ENCODE measurements at regions of chr19 and their contacts with region 1.

Region 1: DNA sequence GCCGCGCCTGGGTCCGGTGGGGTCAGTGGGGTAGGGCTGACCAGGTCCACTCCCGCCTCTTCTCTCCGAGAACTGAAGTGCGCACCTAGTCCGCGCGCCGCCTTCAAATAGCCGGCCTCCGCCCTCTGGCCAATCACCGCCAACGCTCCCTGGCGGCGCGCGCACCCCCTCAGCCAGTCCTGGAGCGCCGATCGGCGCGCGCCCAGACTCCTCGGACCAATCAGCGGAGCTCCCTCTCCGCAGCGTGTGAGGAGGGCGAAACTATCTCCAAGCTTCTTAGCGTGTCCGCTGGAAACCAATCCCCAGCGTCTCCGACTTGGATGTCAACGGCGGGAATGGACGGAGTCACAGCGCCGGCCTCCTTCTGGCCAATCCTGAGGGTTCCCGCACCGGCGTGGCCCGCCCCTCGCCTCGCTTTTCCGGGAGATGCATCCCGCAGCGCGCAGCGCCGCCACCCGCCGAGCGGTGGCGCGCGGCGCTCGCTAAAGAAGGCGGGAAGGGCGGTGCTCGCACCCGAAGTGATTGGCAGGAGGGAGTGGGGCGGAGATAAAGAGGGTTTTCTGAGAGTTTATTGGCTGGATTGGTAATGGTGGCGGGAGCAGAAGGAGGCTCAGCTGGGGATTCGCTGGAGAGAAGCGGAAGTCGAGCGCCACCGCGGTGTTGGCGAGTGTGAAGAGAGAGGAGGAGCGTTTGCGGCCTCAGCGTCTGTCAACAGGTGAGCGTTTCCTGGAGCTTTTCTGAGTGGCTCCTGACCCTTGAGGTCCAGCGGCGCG is at the start of gene ASF1B:
- DNase-seq: peak; percentile 98
- CTCF ChIP-seq: peak; percentile 90

Region 2: GRCh38 chr19:14073261-14073924 is 63.3 kb before region 1 on chr19:
- CTCF ChIA-PET with region 1: interaction called, 13 read pairs
- POLR2A ChIA-PET with region 1: no interaction called
- DNase-seq: peak; percentile 83
- CTCF ChIP-seq: peak; percentile 90

Region 3: DNA sequence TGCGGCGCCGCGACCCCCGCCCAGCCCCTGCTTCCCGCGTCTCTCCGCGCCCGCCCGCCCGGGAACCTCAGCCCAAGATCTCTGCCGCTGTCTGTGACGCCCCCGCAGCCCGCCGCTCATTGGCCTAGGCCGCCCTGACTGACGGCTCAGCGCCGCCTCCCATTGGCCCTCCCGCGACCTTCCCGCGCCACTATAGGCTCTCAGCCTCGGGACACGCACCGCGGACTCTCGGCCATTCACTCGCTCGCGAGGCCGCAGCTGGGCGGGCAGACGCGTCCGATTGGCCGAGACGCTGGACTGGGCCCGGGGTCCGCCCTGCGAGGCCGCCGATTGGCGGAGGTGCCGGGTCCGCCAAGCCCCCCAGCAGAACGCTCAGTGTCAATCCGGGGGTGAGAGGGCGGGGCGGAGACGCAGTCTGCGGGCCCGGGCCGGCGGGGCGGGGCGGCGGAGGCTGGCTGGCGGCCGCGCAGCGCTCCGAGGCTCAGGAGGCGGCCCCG is 19.0 kb before region 1 on chr19 and contains the start of gene PRKACA:
- CTCF ChIA-PET with region 1: interaction called, 50 read pairs
- POLR2A ChIA-PET with region 1: no interaction called
- DNase-seq: peak; percentile 99
- CTCF ChIP-seq: no peak

Region 4: GRCh38 chr19:14147797-14148605 is 11.3 kb after region 1 on chr19:
- CTCF ChIA-PET with region 1: interaction called, 16 read pairs
- POLR2A ChIA-PET with region 1: interaction called, 4 read pairs
- DNase-seq: peak; percentile 74
- CTCF ChIP-seq: peak; percentile 74

Region 5: DNA sequence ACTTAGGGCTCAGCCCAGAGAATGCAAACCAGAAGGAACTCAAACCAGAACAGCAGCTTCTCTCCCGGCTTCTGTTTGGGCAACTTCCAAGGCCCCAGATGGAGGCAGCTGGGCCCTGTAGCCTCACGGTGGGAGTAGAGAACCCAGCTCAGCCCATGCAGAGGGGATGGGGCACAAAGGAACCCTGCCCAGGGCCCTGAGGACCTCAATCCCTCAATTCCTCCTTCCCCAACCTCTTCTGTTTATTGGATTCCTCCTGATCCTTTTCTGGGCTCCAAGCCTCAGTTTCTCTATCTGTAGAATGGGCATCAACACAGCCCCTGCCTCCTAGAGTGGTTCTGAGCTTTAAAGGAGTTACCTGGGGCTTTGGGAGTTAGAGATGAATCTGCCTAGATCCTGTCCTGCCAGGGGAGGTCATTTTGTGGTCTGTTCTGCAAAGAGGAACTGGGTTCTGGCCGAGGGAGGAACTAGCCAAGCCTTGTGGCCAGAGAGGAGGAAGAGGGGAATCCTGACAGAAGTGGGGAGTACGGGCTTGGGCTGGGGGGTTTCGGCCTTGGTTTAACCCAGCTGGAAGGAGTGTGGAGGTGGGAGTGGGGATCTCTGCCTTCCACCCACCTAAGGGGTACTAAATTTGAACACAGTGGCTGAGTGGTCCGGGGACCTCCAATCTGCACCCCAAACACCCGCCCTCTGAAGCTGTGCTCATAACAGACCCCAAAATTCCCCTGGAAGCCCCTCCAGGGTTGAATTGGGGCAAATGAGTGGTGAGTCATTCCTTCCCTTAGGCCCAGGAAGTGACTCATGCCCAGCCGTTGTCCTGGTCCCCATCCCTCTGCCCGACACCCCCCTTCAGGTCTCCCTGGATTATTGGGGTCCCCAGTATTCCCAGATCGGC is 247.2 kb after region 1 on chr19:
- CTCF ChIA-PET with region 1: interaction called, 13 read pairs
- POLR2A ChIA-PET with region 1: interaction called, 8 read pairs
- DNase-seq: peak; percentile 70
- CTCF ChIP-seq: no peak

Region 6: GRCh38 chr19:14479975-14480699 is 343.4 kb after region 1 on chr19:
- CTCF ChIA-PET with region 1: interaction called, 30 read pairs
- POLR2A ChIA-PET with region 1: interaction called, 3 read pairs
- DNase-seq: peak; percentile 87
- CTCF ChIP-seq: peak; percentile 98

Measured in GM10248 (cell line).